Activated naive CD4-positive, alpha-beta T cell treated with anti-CD3 and anti-CD28 coated beads for 36 hours (primary cell): ENCODE measurements at regions of chr7 and their contacts with region 1.

Region 1: DNA sequence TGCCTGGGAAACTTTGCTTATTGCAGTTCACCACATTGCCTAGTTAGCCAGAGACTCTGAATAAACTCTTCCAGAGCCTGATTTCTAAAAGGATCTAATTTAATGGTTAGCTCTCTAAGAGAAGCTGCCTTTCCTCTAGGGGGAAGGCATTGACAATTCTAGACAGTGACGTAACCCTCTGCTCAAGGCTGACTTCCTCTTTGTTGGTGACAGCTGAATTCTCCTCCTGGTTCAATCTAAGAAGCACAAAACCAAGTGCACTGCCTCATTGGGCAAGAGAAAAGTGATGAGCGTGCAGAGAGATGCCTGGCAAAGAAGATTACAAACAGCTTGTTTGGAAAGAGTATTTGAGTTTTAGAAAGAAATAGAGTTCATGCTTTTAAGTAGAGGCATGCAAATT is 102.7 kb downstream of the MACC1 start:
- DNase-seq: peak; percentile 8
- H3K4me3 Mint-ChIP-seq: no peak overlapping the region
- H3K27ac Mint-ChIP-seq: no peak overlapping the region
- H3K4me1 Mint-ChIP-seq: peaks cover 11% of the 10 kb centered on the region
- H3K27me3 Mint-ChIP-seq: no peaks in the 10 kb centered on the region

Region 2: GRCh38 chr7:20199015-20199737 is 84.7 kb after region 1 on chr7:
- CTCF ChIA-PET with region 1: no interaction called
- intact Hi-C with region 1: loop called (anchors 5 kb)
- DNase-seq: peak; percentile 10
- H3K4me3 Mint-ChIP-seq: no peak overlapping the region
- H3K27ac Mint-ChIP-seq: no peak overlapping the region
- H3K4me1 Mint-ChIP-seq: peaks cover 3% of the 10 kb centered on the region
- H3K27me3 Mint-ChIP-seq: no peaks in the 10 kb centered on the region

Region 3: DNA sequence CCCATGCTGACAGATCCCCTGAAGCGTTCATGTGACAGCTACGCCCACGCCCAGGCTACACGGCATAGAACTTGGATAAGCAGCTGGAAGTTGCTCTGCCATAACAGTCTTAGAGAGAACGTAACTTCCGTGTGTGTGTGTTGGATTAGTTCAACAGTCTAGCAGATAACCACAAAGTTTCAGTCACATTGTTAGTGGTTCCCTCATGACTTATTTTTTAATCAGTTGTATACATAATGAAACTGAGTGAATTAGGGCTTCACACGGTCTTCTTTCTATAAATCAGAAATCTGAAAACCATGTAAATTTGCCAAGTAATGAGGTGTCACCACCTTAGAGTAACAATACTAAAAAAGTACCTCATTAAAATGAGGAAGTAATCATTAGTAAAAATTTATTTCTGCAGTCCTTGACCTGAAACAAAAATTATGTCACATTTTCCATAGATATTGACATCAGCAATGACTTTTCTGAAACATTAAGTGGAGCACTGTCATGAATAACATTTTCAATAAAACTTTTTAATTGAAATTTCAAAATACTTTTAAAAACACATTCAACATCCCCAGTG is 124.4 kb after region 1 on chr7:
- CTCF ChIA-PET with region 1: no interaction called
- intact Hi-C with region 1: loop called (anchors 1 kb)
- DNase-seq: peak; percentile 14
- H3K4me3 Mint-ChIP-seq: no peak overlapping the region
- H3K27ac Mint-ChIP-seq: no peak overlapping the region
- H3K4me1 Mint-ChIP-seq: peaks cover 4% of the 10 kb centered on the region
- H3K27me3 Mint-ChIP-seq: peaks cover 15% of the 10 kb centered on the region

Region 4: GRCh38 chr7:20280475-20281351 is 166.2 kb after region 1 on chr7:
- CTCF ChIA-PET with region 1: no interaction called
- intact Hi-C with region 1: loop called (anchors 5 kb)
- DNase-seq: no peak
- H3K4me3 Mint-ChIP-seq: no peak overlapping the region
- H3K27ac Mint-ChIP-seq: no peak overlapping the region
- H3K4me1 Mint-ChIP-seq: no peaks in the 10 kb centered on the region
- H3K27me3 Mint-ChIP-seq: no peaks in the 10 kb centered on the region